Activated CD4-positive, alpha-beta memory T cell treated with anti-CD3 and anti-CD28 coated beads, Interleukin-2, amount 10 ng/mL, durations not matched to agents 7 days and 5 days (primary cell): ENCODE measurements at regions of chr6 and their contacts with region 1.

Region 1: GRCh38 chr6:37819177-37819823 is at the start of gene ZFAND3:
- DNase-seq: peak; percentile 95
- H3K4me3 Mint-ChIP-seq: peak within 1 kb of the TSS; percentile 97
- H3K27ac Mint-ChIP-seq: peak within 1 kb of the TSS; percentile 96
- H3K4me1 Mint-ChIP-seq: peaks cover 45% of the 10 kb centered on the region
- H3K27me3 Mint-ChIP-seq: peaks cover 4% of the 10 kb centered on the region
- total RNA-seq, gene ZFAND3: 35.2 to 38.2 TPM

Region 2: GRCh38 chr6:37516076-37516919 is 303.0 kb before region 1 on chr6:
- CTCF ChIA-PET with region 1: no interaction called
- POLR2A ChIA-PET with region 1: interaction called, 10 read pairs
- DNase-seq: peak; percentile 89
- H3K4me3 Mint-ChIP-seq: peak overlapping the region; percentile 78
- H3K27ac Mint-ChIP-seq: peak overlapping the region; percentile 99
- H3K4me1 Mint-ChIP-seq: peaks cover 69% of the 10 kb centered on the region
- H3K27me3 Mint-ChIP-seq: no peaks in the 10 kb centered on the region

Region 3: GRCh38 chr6:37698261-37699137 is 120.8 kb before region 1 on chr6:
- CTCF ChIA-PET with region 1: no interaction called
- POLR2A ChIA-PET with region 1: interaction called, 15 read pairs
- DNase-seq: peak; percentile 77
- H3K4me3 Mint-ChIP-seq: peak overlapping the region; percentile 94
- H3K27ac Mint-ChIP-seq: peak overlapping the region; percentile 94
- H3K4me1 Mint-ChIP-seq: peaks cover 36% of the 10 kb centered on the region
- H3K27me3 Mint-ChIP-seq: peaks cover 6% of the 10 kb centered on the region

Region 4: DNA sequence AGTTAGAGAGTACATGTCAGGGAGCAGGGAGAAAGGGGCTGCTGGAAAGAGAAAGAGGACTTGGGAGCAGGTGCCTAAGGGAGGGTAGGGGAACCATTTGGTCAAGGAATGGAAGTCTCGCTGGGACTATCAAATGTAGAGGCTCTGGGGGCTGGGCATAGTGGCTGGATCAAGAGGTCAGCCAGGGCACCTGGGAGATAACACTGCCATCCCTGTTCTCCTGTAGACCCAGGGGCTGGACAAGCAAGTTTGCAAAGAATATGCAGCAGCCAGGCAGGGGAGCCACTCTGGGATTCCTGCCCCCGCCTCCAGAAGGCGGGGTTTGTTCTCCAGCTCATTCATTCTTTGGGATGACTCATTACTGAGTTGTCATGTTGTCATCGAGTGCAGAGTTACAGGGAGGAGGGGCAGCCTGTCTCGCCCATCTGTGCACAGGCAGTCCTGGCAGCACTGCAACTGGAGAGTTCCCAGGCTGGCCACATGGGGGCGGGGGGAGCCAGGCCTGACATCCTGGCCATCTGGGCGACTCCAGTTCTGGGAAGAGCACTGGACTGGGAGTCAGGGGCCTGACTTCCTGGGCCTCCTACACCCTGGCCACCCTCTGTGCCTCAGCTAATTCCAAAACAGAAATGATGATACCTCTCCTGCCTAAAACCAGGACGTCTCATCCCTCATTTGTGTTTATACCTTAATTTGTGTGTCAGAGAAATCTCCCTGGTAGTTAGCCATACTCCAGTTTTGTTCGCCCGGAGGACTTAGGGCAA is 28.0 kb before region 1 on chr6:
- CTCF ChIA-PET with region 1: interaction called, 12 read pairs
- POLR2A ChIA-PET with region 1: interaction called, 3 read pairs
- DNase-seq: peak; percentile 83
- H3K4me3 Mint-ChIP-seq: no peak overlapping the region
- H3K27ac Mint-ChIP-seq: no peak overlapping the region
- H3K4me1 Mint-ChIP-seq: peaks cover 10% of the 10 kb centered on the region
- H3K27me3 Mint-ChIP-seq: no peaks in the 10 kb centered on the region

Region 5: GRCh38 chr6:37807656-37808055 is 11.6 kb before region 1 on chr6:
- CTCF ChIA-PET with region 1: no interaction called
- POLR2A ChIA-PET with region 1: interaction called, 23 read pairs
- DNase-seq: no peak
- H3K4me3 Mint-ChIP-seq: no peak overlapping the region
- H3K27ac Mint-ChIP-seq: no peak overlapping the region
- H3K4me1 Mint-ChIP-seq: no peaks in the 10 kb centered on the region
- H3K27me3 Mint-ChIP-seq: peaks cover 10% of the 10 kb centered on the region